Prostate gland (tissue), 2 donors: ENCODE measurements at regions of chr10 and their contacts with region 1.

Region 1: DNA sequence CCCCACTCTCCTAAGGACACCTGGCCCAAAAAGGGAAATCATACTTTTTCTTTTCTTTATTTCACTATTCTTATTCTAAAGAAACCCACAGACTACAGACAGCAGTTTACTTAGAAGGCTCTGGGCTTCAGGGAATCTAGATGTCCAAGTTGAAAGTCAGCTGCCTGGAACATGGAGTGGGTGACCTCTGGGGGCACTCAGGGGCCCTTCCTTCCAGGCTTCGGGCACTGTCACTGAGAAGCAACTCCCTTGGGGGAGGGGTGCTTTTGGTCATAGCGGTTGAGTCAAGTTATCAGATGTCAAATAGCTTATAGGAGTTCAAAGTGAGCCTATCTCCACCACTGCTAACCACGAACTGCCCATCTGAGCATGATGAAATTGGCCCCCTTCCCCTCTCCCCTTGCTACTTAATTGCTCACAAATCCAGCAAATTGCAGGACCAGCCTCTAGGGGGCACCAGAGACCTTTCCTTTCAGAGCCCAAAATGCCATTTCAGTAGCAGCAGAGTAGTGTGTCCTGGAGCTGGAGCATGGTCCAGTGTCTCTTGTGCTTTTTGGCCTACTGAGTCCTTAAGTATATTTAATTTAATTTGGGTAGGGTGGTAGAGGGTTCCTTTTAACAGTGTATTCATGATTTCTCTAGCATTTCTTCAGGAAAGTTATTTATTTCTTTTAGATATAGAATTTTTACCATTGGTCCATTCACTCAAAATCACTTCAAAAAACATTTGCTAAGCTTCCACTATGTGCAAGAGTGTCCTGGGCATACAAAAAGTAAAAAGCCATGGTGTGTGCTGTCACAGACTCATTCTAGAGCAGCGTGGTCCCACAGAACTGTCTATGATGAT is 463.8 kb downstream of the KCNMA1 start:
- DNase-seq: peak; percentile 67
- H3K4me3 ChIP-seq: no peak overlapping the region
- H3K27ac ChIP-seq: no peak overlapping the region
- H3K4me1 ChIP-seq: no peaks in the 10 kb centered on the region
- H3K27me3 ChIP-seq: no peaks in the 10 kb centered on the region
- CTCF ChIP-seq: peak; percentile 85 to 94 (median 90)
- POLR2A ChIP-seq: no peak

Region 2: DNA sequence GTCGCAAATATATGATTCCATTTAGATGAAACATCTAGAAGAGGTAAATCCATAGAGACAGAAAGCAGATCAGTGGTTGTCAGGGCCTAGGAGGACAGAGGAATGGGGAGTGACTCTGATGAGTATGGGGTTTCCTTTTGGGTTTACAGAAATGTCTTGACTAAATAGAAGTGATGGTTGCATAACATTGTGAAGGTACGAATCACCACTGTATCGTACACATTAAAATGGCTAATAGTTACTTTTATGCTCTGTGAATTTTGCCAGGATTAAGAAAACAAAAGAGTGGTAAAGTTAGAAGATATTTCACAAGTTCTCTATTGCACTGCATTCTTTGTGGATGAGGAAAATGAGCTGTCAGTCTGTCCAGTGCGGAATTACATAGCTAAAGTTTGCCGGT is 56.4 kb after region 1 on chr10:
- intact Hi-C with region 1: no loop called
- DNase-seq: no peak
- H3K4me3 ChIP-seq: no peak overlapping the region
- H3K27ac ChIP-seq: no peak overlapping the region
- H3K4me1 ChIP-seq: no peaks in the 10 kb centered on the region
- H3K27me3 ChIP-seq: no peaks in the 10 kb centered on the region
- CTCF ChIP-seq: no peak
- POLR2A ChIP-seq: no peak

Region 3: DNA sequence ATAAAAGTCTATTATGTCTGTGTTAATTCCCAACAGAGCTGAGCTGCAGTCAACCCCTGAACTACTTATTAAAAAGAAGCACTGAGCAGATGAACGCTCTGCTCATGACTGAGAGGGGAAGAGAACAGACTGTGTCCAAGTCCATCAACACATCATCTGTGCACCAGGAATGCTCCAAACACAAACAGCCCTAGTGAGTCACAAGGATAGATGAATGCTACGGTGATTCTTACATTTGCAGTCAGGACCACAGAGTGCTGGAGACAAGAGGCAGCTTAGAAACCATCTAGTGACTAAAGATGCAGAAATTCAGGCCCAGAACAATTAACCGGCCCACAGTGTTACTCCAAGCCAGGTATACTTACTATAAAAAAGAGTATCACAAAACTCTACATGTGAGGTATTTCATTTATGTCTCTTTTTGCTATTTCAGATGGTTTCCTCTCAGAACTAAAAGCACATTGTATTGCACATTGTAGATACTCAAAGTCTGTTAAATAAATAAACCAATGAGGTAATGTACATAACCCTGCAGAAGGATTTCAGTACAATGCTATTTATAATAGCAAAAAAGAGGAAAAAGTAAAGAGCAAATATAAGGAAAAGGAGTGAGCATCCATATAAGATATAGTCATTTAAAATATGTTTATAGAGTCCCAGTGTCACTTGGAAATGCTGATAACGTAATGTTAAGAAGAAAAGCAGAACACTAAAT is 304.6 kb after region 1 on chr10:
- intact Hi-C with region 1: loop called (anchors 5 kb)
- DNase-seq: no peak
- H3K4me3 ChIP-seq: no peak overlapping the region
- H3K27ac ChIP-seq: no peak overlapping the region
- H3K4me1 ChIP-seq: peaks cover 3% of the 10 kb centered on the region
- H3K27me3 ChIP-seq: no peaks in the 10 kb centered on the region
- CTCF ChIP-seq: no peak
- POLR2A ChIP-seq: no peak